CD14-positive monocyte (primary cell): ENCODE measurements at regions of chr10 and their contacts with region 1.

Region 1: DNA sequence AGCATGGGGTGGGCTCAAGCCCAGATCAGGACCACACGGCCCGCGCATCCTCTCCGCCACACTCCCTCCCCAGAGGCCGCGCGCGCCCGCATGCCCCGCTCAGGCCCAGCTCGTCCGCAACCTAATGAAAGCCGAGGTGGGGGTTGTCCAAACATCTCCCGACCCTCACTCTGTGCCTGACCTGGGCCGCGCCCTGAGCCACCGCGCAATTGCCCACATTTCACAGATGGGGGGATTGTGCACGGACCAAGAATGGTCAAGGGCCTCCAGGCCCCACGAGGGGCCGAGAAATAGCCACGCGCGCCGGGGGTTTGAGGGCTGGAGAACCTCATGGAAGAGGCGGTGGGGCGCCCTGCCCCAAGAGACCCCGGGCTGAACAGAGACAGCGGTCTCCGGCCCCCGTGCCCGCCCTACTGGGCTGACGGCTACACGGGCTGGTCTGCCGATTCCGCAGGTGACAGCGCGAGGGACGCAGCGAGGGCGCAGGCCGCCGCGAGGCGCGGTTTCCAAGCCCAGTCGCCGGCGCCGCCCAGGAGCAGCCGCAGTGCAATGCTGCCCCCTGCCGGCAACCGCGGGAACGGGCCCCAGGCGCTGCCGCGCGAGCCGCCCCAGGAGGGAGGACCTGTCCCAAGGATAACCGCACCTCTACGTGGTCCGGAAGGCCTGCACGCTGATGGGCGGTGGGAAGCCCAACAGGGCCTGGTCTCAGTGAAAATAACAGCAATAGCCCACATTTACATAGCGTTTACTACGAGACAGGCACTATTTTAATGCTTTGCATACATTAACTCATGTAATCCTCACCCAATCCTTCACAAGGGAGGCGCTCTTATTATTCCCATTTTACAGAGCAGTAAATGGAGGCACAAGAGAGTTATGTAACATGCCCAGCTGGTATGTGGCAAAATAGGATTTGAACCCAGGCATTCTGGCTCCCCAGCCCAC is 10.5 kb upstream of the GRID1 start:
- DNase-seq: peak; percentile 45 to 62 (median 49)
- H3K4me3 ChIP-seq: no peak overlapping the region
- H3K4me3 Mint-ChIP-seq: peak overlapping the region in 1 of 2 donors; percentile 51
- H3K27ac ChIP-seq: no peak overlapping the region
- H3K27ac Mint-ChIP-seq: no peak overlapping the region
- H3K4me1 ChIP-seq: peaks cover 3 to 4% of the 10 kb centered on the region in 2 donors
- H3K4me1 Mint-ChIP-seq: no peaks in the 10 kb centered on the region
- H3K27me3 ChIP-seq: peaks cover 0 to 25% of the 10 kb centered on the region in 2 donors
- H3K27me3 Mint-ChIP-seq: peaks cover 31 to 57% (median 42%) of the 10 kb centered on the region in 3 donors
- CTCF ChIP-seq: peak; percentile 99

Region 2: DNA sequence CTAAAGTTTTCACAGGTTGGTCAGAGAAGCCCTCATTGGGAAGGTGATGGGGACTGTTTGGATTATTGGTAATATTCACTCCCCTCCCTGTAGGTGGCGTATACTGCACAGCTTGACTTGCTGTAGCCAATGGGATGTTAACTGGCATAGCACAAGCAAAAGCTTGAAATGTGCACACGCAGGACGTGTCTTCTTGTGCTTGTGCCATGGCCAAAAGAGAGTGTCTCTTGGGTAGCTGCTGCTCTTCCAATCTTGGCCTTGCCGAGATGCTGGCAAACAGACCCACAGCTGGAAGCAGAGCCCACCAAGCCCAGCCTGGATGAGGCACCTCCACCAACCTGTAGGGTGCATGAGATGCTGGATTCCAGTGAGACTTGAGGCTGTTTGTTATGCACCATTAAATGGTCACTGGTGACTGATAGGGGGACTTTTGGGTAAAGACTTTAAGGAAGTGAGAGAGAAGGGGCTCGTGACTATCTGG is 276.5 kb before region 1 on chr10:
- intact Hi-C with region 1: loop called (anchors 5 kb)
- DNase-seq: peak in 2 of 3 donors; percentile 8 to 27
- H3K4me3 ChIP-seq: no peak overlapping the region
- H3K4me3 Mint-ChIP-seq: no peak overlapping the region
- H3K27ac ChIP-seq: no peak overlapping the region
- H3K27ac Mint-ChIP-seq: no peak overlapping the region
- H3K4me1 ChIP-seq: no peaks in the 10 kb centered on the region
- H3K4me1 Mint-ChIP-seq: no peaks in the 10 kb centered on the region
- H3K27me3 ChIP-seq: peaks cover 0 to 3% of the 10 kb centered on the region in 2 donors
- H3K27me3 Mint-ChIP-seq: peaks cover 2% of the 10 kb centered on the region in 3 donors
- CTCF ChIP-seq: peak; percentile 50

Region 3: GRCh38 chr10:86334488-86335085 is 42.5 kb before region 1 on chr10:
- intact Hi-C with region 1: no loop called
- DNase-seq: no peak
- H3K4me3 ChIP-seq: no peak overlapping the region
- H3K4me3 Mint-ChIP-seq: no peak overlapping the region
- H3K27ac ChIP-seq: no peak overlapping the region
- H3K27ac Mint-ChIP-seq: no peak overlapping the region
- H3K4me1 ChIP-seq: no peaks in the 10 kb centered on the region
- H3K4me1 Mint-ChIP-seq: no peaks in the 10 kb centered on the region
- H3K27me3 ChIP-seq: no peaks in the 10 kb centered on the region
- H3K27me3 Mint-ChIP-seq: peaks cover 5 to 13% (median 5%) of the 10 kb centered on the region in 3 donors
- CTCF ChIP-seq: no peak